ENCODE measurements at regions of chr6 and their contacts with region 1.

Region 1: GRCh38 chr6:3742426-3743344 is 8.8 kb downstream of the PXDC1 start:
- DNase-seq: peak; percentile 88
- ATAC-seq: peak; percentile 26
- H3K4me3 Mint-ChIP-seq: peak overlapping the region; percentile 59
- H3K27ac Mint-ChIP-seq: peak overlapping the region; percentile 76
- H3K4me1 Mint-ChIP-seq: peaks cover 48% of the 10 kb centered on the region
- H3K27me3 Mint-ChIP-seq: no peaks in the 10 kb centered on the region
- CTCF ChIP-seq: peak; percentile 55

Region 2: DNA sequence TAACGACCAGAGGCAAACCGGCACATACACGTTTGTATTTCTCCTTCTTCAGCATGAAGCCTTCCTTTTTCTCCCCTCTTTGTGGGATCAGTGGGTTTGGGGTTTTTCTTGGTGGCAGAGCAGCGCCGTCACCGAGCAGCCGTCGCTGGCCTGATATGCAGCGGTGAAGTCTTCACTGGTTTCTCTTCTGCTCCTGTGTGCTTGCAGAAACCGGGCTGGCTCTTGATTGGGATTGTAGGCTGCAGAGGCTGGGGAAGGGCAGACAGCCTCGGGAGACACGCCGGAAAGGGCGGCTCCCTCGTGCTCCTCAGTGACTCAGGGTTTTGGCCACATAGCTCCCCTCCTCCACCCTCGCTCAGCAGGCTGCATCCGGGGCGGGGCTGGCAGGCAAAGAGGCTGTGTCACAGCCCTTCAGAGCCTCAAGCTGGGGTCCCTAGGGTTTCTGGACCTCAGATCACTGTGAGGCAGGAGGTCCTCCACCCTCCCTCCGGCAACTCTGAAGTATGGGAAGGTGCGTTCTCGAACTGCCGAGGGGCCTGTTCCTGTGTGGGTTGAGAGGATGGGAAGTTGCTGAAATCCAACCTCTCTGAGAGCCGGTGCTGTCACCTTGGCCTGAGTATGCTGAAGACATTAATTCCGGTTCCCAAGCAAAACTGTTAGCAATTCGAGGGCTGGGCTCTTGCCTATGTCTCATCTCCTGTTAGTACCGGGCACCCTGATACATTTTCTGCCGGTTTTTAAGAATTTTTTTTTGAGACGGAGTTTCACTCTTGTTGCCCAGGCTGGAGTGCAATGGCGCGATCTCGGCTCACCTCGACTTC is 718.8 kb before region 1 on chr6:
- CTCF ChIA-PET with region 1: no interaction called
- POLR2A ChIA-PET with region 1: no interaction called
- intact Hi-C with region 1: loop called (anchors 1 kb)
- DNase-seq: peak; percentile 76
- ATAC-seq: peak; percentile 82
- H3K4me3 Mint-ChIP-seq: peak overlapping the region; percentile 90
- H3K27ac Mint-ChIP-seq: peak overlapping the region; percentile 88
- H3K4me1 Mint-ChIP-seq: peaks cover 54% of the 10 kb centered on the region
- H3K27me3 Mint-ChIP-seq: no peaks in the 10 kb centered on the region
- CTCF ChIP-seq: no peak

Region 3: GRCh38 chr6:3669916-3670315 is 72.8 kb before region 1 on chr6:
- CTCF ChIA-PET with region 1: no interaction called
- POLR2A ChIA-PET with region 1: no interaction called
- intact Hi-C with region 1: no loop called
- DNase-seq: no peak
- ATAC-seq: no peak
- H3K4me3 Mint-ChIP-seq: no peak overlapping the region
- H3K27ac Mint-ChIP-seq: no peak overlapping the region
- H3K4me1 Mint-ChIP-seq: no peaks in the 10 kb centered on the region
- H3K27me3 Mint-ChIP-seq: peaks cover 11% of the 10 kb centered on the region
- CTCF ChIP-seq: no peak

Region 4: DNA sequence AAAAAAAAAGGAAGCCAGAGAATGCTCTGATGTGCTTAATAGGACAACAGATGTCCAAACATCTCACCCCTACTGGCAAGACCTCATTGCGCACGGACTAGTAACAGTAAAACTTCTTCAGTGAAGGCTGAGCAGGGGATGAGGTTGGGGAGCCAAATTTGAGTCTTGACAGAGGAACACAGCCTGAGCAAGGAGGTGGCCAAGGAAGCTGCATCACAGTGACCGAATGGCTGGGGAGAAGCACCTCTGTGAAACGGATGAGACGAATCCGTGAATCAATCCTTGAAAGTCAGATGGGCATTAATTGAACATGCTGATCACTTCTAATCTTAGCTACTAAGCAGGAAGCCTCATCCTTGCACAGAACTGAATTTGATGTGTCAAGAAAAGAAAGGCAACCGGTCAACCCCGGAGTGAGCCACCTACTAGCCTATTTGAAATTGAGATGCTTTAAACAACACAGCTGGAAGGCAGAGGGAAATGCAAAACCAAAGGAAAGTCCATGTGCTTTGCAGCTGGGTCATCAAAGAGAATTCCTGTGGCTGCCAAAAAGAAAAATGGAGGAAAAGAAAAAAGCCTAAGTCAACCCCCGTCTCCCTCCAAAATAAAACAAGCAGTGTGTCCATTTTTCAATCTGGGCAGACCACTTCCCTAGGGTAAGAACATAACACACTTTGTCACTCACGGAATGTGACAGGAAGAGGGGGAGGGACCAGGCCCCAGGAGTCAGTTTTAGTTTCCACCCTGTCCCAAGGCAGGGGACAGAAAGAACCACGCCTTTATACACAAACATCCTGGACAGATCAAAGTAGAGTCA is 20.7 kb before region 1 on chr6:
- CTCF ChIA-PET with region 1: no interaction called
- POLR2A ChIA-PET with region 1: no interaction called
- intact Hi-C with region 1: no loop called
- DNase-seq: no peak
- ATAC-seq: no peak
- H3K4me3 Mint-ChIP-seq: no peak overlapping the region
- H3K27ac Mint-ChIP-seq: no peak overlapping the region
- H3K4me1 Mint-ChIP-seq: no peaks in the 10 kb centered on the region
- H3K27me3 Mint-ChIP-seq: no peaks in the 10 kb centered on the region
- CTCF ChIP-seq: no peak

Region 5: GRCh38 chr6:3825851-3826581 is 83.3 kb after region 1 on chr6:
- CTCF ChIA-PET with region 1: no interaction called
- POLR2A ChIA-PET with region 1: no interaction called
- intact Hi-C with region 1: no loop called
- DNase-seq: no peak
- ATAC-seq: no peak
- H3K4me3 Mint-ChIP-seq: no peak overlapping the region
- H3K27ac Mint-ChIP-seq: no peak overlapping the region
- H3K4me1 Mint-ChIP-seq: no peaks in the 10 kb centered on the region
- H3K27me3 Mint-ChIP-seq: peaks cover 6% of the 10 kb centered on the region
- CTCF ChIP-seq: no peak

Region 6: GRCh38 chr6:3887150-3887700 is 144.5 kb after region 1 on chr6:
- CTCF ChIA-PET with region 1: interaction called, 21 read pairs
- POLR2A ChIA-PET with region 1: no interaction called
- intact Hi-C with region 1: loop called (anchors 1 kb)
- DNase-seq: no peak
- ATAC-seq: no peak
- H3K4me3 Mint-ChIP-seq: no peak overlapping the region
- H3K27ac Mint-ChIP-seq: no peak overlapping the region
- H3K4me1 Mint-ChIP-seq: no peaks in the 10 kb centered on the region
- H3K27me3 Mint-ChIP-seq: peaks cover 9% of the 10 kb centered on the region
- CTCF ChIP-seq: no peak

Region 7: DNA sequence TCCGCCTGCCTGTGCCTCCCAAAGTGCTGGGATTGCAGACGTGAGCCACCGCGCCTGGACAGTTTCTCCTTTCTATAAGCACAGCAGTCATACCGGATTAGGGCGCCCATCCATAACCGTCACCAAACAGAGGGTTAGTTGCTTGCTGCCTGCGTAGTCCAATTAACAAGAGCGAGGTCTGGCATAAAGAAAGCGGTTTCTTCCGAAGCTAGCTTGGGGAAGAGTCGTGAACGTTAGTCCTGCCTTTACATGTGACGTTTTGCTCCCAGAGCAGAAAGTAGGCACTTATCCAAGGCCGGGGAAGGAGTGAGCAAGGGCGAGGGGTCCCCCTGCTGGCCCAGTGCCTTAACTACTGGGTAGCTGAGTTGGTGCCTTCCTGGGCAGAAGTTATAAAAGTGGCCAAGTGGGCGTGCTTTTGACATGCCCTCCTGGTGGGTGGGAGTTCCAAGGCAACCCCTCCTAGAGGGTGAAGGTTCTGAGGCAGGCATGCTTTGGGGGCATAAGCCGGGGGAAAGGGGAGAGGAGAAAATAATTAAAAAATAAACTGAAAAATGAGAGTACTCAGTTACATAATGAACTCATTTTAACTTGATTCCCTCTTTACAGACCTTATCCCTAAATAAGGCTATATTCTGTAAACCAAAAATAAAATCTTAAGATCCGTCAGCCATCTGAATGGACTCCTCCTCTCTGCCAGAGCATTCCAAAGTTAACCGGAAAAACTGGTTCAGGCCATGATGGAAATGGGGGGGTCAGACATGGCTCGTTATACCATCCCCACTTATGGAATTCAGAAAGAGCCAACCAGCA is 248.2 kb after region 1 on chr6:
- CTCF ChIA-PET with region 1: interaction called, 16 read pairs
- POLR2A ChIA-PET with region 1: interaction called, 16 read pairs
- intact Hi-C with region 1: loop called (anchors 1 kb)
- DNase-seq: peak; percentile 59
- ATAC-seq: peak; percentile 95
- H3K4me3 Mint-ChIP-seq: no peak overlapping the region
- H3K27ac Mint-ChIP-seq: no peak overlapping the region
- H3K4me1 Mint-ChIP-seq: peaks cover 9% of the 10 kb centered on the region
- H3K27me3 Mint-ChIP-seq: no peaks in the 10 kb centered on the region
- CTCF ChIP-seq: no peak

Region 8: DNA sequence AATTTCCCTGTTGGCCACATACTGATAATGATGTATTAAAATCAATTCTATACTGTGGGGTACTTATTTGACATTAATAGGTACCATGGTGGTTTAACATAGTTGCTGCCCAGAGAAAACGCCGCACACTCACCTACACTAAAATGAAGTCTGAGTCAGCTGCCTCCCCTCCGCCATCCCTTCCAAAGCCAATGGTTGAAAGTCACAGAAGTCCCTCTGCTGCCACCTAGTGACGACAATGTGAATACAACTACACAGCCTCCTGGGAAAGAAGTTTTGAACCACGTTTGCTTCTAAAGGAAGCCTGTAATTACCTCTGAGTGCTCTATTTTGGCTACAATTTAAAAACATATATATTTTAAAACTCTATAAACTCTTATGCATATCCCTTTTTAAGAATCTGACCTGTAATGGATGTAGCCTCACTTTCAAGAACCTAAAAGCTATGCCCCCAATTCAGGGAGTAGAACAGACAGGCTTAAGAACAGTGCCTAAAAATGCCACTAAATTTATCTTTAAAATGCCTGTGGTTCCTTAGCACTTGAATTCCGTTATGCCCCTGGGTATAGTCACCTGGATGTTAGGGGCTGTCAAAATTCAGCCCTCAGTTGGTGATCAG is 413.3 kb after region 1 on chr6:
- CTCF ChIA-PET with region 1: interaction called, 9 read pairs
- POLR2A ChIA-PET with region 1: interaction called, 7 read pairs
- intact Hi-C with region 1: loop called (anchors 1 kb)
- DNase-seq: no peak
- ATAC-seq: peak; percentile 84
- H3K4me3 Mint-ChIP-seq: no peak overlapping the region
- H3K27ac Mint-ChIP-seq: peak overlapping the region; percentile 5
- H3K4me1 Mint-ChIP-seq: peaks cover 34% of the 10 kb centered on the region
- H3K27me3 Mint-ChIP-seq: no peaks in the 10 kb centered on the region
- CTCF ChIP-seq: peak; percentile 68

Region 9: GRCh38 chr6:5398530-5398929 is 1655.8 kb after region 1 on chr6:
- CTCF ChIA-PET with region 1: no interaction called
- POLR2A ChIA-PET with region 1: no interaction called
- intact Hi-C with region 1: loop called (anchors 5 kb)
- DNase-seq: no peak
- ATAC-seq: peak; percentile 87
- H3K4me3 Mint-ChIP-seq: no peak overlapping the region
- H3K27ac Mint-ChIP-seq: no peak overlapping the region
- H3K4me1 Mint-ChIP-seq: peaks cover 2% of the 10 kb centered on the region
- H3K27me3 Mint-ChIP-seq: no peaks in the 10 kb centered on the region
- CTCF ChIP-seq: no peak

Measured in activated B cell treated with CpG ODN at 0.5 μM for 24 hours (primary cell).